Breast epithelium (tissue), 4 donors: ENCODE measurements at regions of chr9 and their contacts with region 1.

Region 1: DNA sequence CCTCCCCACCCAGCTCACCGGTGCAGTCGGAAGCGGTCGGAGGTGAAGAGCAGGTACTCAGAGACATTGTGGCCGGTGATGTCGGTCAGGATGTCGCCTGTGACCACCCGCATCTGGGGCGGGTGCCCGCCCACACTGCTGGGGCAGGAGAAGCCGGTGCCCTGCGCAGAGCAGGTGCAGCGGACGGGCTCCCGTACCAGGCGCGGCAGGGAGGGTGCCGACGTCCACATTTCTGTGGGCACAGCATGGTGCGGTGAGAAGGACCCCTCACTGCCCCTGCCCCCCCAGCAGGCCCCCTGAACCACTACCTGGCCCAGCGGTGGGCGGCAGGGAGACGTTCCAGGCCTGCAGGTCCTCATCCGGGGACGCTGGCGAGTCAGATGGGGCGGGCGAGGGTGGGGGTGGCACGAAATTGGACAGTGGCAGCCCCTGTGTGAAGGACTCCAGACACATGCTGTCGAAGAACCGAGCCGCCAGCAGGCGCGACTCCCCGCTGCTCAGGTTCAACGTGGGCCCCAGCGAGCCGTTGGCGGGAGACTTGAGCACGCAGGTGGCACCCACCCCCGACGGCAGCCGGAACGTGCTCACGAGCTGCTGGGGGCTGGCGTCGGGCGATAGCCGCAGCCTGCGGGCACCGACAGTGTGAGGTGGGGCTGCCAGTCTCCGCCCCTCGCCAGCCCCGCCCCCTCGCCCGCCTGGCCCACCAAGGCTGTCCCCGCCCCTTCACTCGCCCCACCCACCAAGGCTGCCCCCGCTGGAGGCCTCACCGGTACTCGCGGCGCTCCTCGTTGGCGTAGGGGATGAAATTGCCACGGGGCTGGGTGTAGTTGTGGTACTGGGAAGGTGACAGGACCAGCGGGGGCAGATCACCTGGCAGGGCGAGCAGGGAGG is 15.1 kb downstream of the ABCA2 start:
- DNase-seq: no peak
- H3K4me3 ChIP-seq: no peak overlapping the region
- H3K27ac ChIP-seq: no peak overlapping the region
- H3K4me1 ChIP-seq: no peaks in the 10 kb centered on the region
- H3K27me3 ChIP-seq: no peaks in the 10 kb centered on the region
- CTCF ChIP-seq: no peak
- POLR2A ChIP-seq: no peak

Region 2: GRCh38 chr9:136991993-136992818 is 20.7 kb before region 1 on chr9 and contains the start of gene PAXX:
- intact Hi-C with region 1: loop called (anchors 1 kb)
- DNase-seq: peak; percentile 86 to 92
- H3K4me3 ChIP-seq: peak within 1 kb of the TSS; percentile 55 to 83 (median 79)
- H3K27ac ChIP-seq: peak within 1 kb of the TSS; percentile 94 to 98
- H3K4me1 ChIP-seq: peaks cover 7 to 27% of the 10 kb centered on the region in 2 donors
- H3K27me3 ChIP-seq: no peaks in the 10 kb centered on the region
- CTCF ChIP-seq: peak in 1 of 3 donors; percentile 15
- POLR2A ChIP-seq: no peak
- total RNA-seq, gene PAXX: 24.6 to 66.2 (median 49.2) TPM